GM12878 (cell line): ENCODE measurements at regions of chr6 and their contacts with region 1.

Region 1: GRCh38 chr6:15464211-15464725 is 198.6 kb downstream of the DTNBP1 start:
- DNase-seq: no peak
- ATAC-seq: peak; percentile 95
- H3K4me3 ChIP-seq: no peak overlapping the region
- H3K27ac ChIP-seq: no peak overlapping the region
- H3K4me1 ChIP-seq: no peaks in the 10 kb centered on the region
- H3K27me3 ChIP-seq: no peaks in the 10 kb centered on the region
- CTCF ChIP-seq: peak; percentile 60 to 78 (median 72)
- EP300 ChIP-seq: no peak
- POLR2A ChIP-seq: no peak
- RAD21 ChIP-seq: peak; percentile 51

Region 2: DNA sequence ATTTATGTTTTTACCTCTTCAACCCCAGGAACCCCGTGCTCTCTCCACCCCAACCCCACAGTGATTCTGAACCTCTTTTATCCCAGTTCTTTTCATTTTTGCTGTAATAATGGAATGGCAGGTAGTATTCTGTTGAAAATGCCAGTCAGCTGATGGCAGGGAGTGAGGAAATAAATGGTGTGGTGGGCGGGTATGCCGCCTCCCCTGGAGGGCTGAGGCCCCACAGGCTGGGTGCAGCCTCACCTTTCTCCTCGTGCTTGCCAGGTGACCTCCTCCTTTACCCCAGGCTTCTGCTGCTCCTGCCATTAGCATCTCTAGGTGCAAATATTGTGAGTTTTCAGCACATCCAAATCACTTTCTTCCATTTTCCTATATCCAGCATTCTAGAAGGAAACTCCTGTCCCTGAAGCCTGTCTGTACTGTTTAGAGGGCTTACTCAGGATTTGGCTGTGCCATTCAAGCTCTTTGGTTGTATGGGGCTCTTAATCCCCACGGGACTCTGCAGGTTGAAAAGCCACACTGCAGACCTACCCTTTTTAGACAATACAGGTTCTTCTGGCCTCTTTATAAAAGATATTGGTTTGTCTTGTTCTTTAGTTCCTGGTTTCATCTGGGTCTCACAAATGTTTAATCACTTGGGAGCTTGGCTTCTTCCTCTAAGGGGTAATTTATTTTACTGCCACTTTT is 16.6 kb before region 1 on chr6:
- CTCF ChIA-PET with region 1: interaction called, 14 read pairs
- POLR2A ChIA-PET with region 1: interaction called, 3 read pairs
- RAD21 ChIA-PET with region 1: no interaction called
- SMC1A ChIA-PET with region 1: interaction called, 5 read pairs
- in situ Hi-C with region 1: no loop called
- intact Hi-C with region 1: no loop called
- DNase-seq: no peak
- ATAC-seq: peak; percentile 45; the same call in 2 of the 3 replicates
- H3K4me3 ChIP-seq: no peak overlapping the region
- H3K27ac ChIP-seq: no peak overlapping the region
- H3K4me1 ChIP-seq: peaks cover 13% of the 10 kb centered on the region
- H3K27me3 ChIP-seq: no peaks in the 10 kb centered on the region
- CTCF ChIP-seq: no peak
- EP300 ChIP-seq: no peak
- POLR2A ChIP-seq: no peak
- RAD21 ChIP-seq: no peak

Region 3: GRCh38 chr6:15479761-15480160 is 15.5 kb after region 1 on chr6:
- CTCF ChIA-PET with region 1: interaction called, 11 read pairs
- POLR2A ChIA-PET with region 1: no interaction called
- RAD21 ChIA-PET with region 1: interaction called, 3 read pairs
- SMC1A ChIA-PET with region 1: interaction called, 7 read pairs
- in situ Hi-C with region 1: no loop called
- intact Hi-C with region 1: no loop called
- DNase-seq: no peak
- ATAC-seq: no peak
- H3K4me3 ChIP-seq: no peak overlapping the region
- H3K27ac ChIP-seq: no peak overlapping the region
- H3K4me1 ChIP-seq: no peaks in the 10 kb centered on the region
- H3K27me3 ChIP-seq: no peaks in the 10 kb centered on the region
- CTCF ChIP-seq: no peak
- EP300 ChIP-seq: no peak
- POLR2A ChIP-seq: no peak
- RAD21 ChIP-seq: no peak

Region 4: DNA sequence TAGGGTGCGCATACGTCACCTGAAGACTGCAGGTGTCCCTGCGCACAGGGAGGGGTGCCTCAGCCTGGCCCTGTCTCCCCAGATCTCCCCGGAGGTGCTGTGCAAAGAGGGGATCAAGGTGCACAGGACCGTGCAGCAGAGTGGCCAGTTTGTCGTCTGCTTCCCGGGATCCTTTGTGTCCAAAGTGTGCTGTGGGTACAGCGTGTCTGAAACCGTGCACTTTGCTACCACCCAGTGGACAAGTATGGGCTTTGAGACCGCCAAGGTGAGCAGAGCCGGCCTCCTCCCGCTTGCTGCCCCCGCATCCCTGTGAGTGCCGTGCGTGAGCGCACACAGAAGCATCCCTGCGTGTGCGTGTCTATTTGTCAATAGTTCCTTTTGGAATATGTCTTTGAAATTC is 47.9 kb after region 1 on chr6:
- CTCF ChIA-PET with region 1: no interaction called
- POLR2A ChIA-PET with region 1: no interaction called
- RAD21 ChIA-PET with region 1: no interaction called
- SMC1A ChIA-PET with region 1: no interaction called
- in situ Hi-C with region 1: no loop called
- intact Hi-C with region 1: no loop called
- DNase-seq: no peak
- ATAC-seq: 0 out of 3 replicates have a peak, but pooled peaks have one; percentile 13
- H3K4me3 ChIP-seq: no peak overlapping the region
- H3K27ac ChIP-seq: no peak overlapping the region
- H3K4me1 ChIP-seq: no peaks in the 10 kb centered on the region
- H3K27me3 ChIP-seq: no peaks in the 10 kb centered on the region
- CTCF ChIP-seq: no peak; a peak in 1 of 6 replicates
- EP300 ChIP-seq: no peak
- POLR2A ChIP-seq: 0 out of 2 replicates have a peak, but pooled peaks have one; percentile 26
- RAD21 ChIP-seq: no peak

Region 5: DNA sequence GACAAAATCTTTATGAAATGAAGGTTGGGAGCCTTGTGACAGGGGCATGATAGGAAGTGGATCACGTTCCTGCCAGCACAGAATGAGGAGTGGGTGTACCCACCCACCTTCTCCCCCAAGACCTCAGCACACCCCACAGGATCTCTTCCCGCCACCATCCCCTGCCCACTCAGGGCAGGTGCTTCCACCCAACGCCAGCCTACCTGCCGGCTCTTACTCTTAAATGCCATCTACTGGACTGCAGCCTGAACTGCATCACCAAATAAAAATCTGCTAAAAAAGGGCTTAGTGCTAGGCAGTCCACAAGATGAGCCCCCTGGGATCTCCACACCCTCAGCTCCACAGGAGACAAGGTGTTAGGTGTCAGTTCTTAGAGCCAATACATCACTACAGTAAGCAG is 178.0 kb after region 1 on chr6:
- CTCF ChIA-PET with region 1: no interaction called
- POLR2A ChIA-PET with region 1: no interaction called
- RAD21 ChIA-PET with region 1: no interaction called
- SMC1A ChIA-PET with region 1: no interaction called
- in situ Hi-C with region 1: no loop called
- intact Hi-C with region 1: no loop called
- DNase-seq: no peak
- ATAC-seq: no peak; the same call in 2 of the 3 replicates
- H3K4me3 ChIP-seq: no peak overlapping the region
- H3K27ac ChIP-seq: no peak overlapping the region
- H3K4me1 ChIP-seq: no peaks in the 10 kb centered on the region
- H3K27me3 ChIP-seq: no peaks in the 10 kb centered on the region
- CTCF ChIP-seq: peak in 2 of 3 experiments; percentile 26 to 34; a peak in 3 of 6 replicates
- EP300 ChIP-seq: no peak
- POLR2A ChIP-seq: no peak
- RAD21 ChIP-seq: no peak

Region 6: DNA sequence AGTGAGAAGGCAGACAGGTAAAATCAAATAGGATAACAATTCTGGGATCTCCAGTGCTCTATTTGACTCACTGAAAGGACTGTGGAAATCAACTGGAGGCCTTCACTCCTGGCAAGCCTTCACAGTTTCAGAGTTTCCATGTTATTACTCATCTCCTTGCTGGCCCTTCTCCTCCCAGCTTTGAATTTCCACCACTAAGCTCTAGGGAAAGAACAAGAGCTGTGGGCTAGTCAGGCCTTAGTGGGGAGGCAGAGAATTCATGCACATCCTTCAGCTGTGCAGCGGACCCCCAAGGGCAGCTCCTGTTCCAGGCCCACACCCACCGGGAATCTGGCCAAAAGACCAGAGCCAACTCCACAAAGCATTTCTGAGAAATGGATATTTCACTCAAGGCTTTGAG is 690.6 kb after region 1 on chr6:
- CTCF ChIA-PET with region 1: no interaction called
- POLR2A ChIA-PET with region 1: no interaction called
- RAD21 ChIA-PET with region 1: no interaction called
- SMC1A ChIA-PET with region 1: no interaction called
- in situ Hi-C with region 1: no loop called
- intact Hi-C with region 1: no loop called
- DNase-seq: no peak
- ATAC-seq: no peak
- H3K4me3 ChIP-seq: no peak overlapping the region
- H3K27ac ChIP-seq: no peak overlapping the region
- H3K4me1 ChIP-seq: no peaks in the 10 kb centered on the region
- H3K27me3 ChIP-seq: no peaks in the 10 kb centered on the region
- CTCF ChIP-seq: no peak
- EP300 ChIP-seq: no peak
- POLR2A ChIP-seq: no peak
- RAD21 ChIP-seq: no peak